Posterior cingulate gyrus (tissue), 11 donors: ENCODE measurements at regions of chr1 and their contacts with region 1.

Region 1: DNA sequence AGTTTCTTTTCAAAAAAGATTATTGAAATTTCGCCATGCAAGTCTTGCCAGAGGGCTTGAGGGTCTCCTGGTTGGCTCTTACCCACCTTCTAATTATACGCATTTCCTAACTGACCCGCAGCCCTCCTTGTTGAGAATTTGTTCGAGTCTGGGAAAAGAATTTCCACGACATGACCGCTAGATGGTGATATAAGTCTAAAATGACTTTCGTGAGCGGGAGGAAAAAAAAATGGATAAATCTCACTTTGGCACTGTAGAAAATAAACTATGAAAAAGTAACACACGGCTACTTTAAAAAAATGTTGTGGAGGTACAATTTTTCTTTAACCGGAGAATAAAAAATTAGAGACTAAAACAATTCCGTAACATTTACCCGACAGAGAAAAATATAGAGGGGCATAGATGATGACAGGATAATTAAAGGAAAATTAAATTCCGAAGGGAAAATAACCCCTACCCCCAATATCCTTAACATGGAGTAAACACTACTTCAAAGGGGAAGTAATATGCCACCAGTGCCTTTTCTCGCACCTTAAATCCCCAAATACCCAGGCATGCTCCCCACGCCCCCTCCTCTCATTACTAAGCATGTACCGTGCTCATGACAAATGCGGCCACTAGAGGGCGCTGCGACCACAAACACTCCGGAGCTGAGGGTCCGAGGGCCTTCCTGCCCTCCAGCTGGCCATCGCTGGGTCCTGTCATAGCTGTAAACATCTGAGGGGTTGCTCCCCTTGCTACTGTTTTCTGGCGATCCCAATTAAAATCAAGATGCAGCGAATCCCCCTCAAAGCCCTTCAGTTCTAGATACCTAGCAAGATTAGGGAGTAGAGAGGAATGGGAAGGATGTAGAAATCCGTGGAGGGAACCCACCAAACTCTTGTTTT is 266.9 kb downstream of the ASTN1 start:
- DNase-seq: peak; percentile 51 to 93 (median 76)

Region 2: DNA sequence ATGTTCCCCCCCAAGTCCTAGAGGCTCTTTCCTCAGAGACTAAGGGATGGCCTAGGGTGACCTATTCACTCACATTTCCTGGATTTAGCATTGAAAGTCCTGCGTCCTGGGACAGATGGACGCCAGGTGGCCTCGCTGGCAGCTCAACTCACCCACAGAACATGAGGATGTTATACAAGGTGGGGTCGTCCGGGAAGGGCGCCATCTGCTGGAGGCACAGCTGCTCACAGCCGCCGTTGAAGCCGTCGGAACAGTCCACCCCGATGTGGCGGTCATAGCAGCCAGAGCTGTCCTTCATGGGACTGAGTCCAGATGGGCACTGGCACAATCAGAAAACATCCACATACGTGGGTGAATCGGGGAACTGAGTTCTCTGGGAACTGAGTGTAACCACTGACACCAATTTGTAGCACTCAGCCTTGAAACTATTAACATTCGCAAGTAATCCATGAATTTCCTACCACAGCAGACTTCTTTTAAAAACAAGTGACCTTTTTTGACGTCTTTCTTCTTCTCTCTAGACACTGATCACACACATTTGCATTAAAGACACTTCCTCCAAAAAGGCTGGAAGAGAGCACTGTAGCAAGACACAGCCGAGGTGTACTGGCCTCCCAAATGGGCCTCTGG is 51.6 kb after region 1 on chr1:
- intact Hi-C with region 1: no loop called
- DNase-seq: peak in 4 of 10 donors; percentile 13 to 85 (median 50)

Region 3: GRCh38 chr1:177181631-177182291 is 284.2 kb after region 1 on chr1:
- intact Hi-C with region 1: loop called (anchors 1 kb)
- DNase-seq: peak; percentile 55 to 95 (median 75)

Region 4: GRCh38 chr1:177219554-177220513 is 322.2 kb after region 1 on chr1:
- intact Hi-C with region 1: no loop called
- DNase-seq: peak in 1 of 10 donors; percentile 65

Region 5: DNA sequence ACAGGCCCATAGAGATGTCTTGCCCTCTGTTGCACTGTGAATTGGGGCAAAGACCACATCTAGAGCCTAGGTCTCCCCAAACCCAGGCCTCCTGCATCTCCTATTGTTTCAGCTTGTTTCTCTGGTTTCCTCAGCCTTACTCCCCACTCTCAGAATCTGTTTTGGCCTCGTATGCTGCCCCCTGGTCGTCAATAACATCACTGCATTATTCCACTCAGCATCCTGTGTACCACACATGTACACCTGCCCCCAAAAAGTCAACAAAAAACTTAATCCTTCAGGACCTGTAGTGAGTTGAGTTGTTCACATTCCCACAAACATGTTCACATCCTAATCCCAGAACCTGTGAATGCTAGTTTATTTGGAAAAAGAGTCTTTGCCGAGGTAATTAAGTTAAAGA is 458.0 kb after region 1 on chr1:
- intact Hi-C with region 1: loop called (anchors 10 kb)
- DNase-seq: peak in 5 of 10 donors; percentile 27 to 85 (median 55)

Region 6: GRCh38 chr1:177780096-177780700 is 882.6 kb after region 1 on chr1:
- intact Hi-C with region 1: loop called (anchors 2 kb)
- DNase-seq: peak in 1 of 10 donors; percentile 12

Region 7: GRCh38 chr1:177948336-177948972 is 1050.9 kb after region 1 on chr1:
- intact Hi-C with region 1: loop called (anchors 5 kb)
- DNase-seq: peak in 9 of 10 donors; percentile 35 to 94 (median 70)